Right ventricle myocardium superior (tissue), 1 donor: ENCODE measurements at regions of chr15 and their contacts with region 1.

Region 1: GRCh38 chr15:63735449-63735848 is 98.3 kb downstream of the HERC1 start:
- DNase-seq: no peak
- ATAC-seq: no peak

Region 2: GRCh38 chr15:63626955-63627354 is 108.5 kb before region 1 on chr15:
- intact Hi-C with region 1: loop called (anchors 10 kb)
- DNase-seq: no peak
- ATAC-seq: no peak